Activated CD4-positive, alpha-beta T cell treated with anti-CD3 and anti-CD28 coated beads for 36 hours (primary cell): ENCODE measurements at regions of chr11 and their contacts with region 1.

Region 1: DNA sequence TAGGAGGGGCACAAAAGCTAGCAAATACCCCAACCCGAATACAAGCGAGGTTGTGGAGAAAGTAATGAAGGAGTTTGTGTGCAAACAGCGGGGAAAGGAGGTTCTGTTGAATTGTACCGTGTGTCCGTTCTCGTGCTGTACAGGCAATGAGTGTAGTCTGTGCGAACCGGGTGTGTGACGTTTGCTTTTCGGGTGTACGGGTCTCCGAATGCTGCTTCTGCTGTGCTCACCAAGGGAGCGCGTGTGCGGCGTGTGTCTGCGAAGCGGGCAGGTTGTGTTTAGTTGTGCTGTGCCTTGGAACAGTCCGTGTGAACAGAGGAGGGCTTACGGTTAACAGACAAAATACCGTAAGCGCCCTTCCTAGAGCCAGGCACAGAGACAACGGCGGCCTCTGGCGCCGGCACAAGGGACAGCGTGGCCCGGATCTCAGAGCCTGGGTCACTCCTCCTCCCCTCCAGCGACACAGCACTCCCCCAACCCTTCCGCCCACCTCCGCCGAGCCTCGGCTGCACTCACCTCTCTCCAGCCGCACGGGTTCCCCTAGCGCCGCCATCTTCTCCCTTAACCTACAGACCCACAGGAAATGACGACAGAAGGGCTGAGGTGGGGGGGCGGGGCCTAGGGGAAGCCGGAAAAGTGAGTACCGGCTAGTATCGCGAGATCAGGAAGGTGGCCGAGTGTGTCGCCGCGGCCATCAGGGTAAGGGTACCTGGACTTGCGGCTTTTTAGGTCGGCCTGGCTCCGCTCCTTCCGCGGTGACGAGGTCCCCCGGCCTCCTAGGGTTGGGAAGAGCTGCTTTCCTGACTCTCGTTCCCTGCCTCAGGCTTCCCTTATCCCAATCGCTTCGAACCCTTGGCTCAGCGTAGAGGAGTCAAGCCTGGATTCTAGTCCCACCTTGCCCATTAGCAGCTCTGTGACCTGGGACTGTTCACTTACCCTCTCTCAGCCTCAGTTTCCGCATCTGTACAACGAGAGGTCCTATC is at the start of gene LIN7C:
- DNase-seq: peak; percentile 98
- ATAC-seq: peak; percentile 93
- H3K4me3 Mint-ChIP-seq: peak within 1 kb of the TSS; percentile 84
- H3K27ac Mint-ChIP-seq: peak within 1 kb of the TSS; percentile 99
- H3K4me1 Mint-ChIP-seq: peaks cover 36% of the 10 kb centered on the region
- H3K27me3 Mint-ChIP-seq: no peaks in the 10 kb centered on the region
- total RNA-seq, gene LIN7C: 16.1 to 19.2 TPM

Region 2: GRCh38 chr11:27472398-27473016 is 34.0 kb before region 1 on chr11 and contains the start of gene LGR4:
- CTCF ChIA-PET with region 1: no interaction called
- POLR2A ChIA-PET with region 1: no interaction called
- intact Hi-C with region 1: loop called in 1 of 2 experiments (anchors 1 kb)
- DNase-seq: peak; percentile 80
- ATAC-seq: peak; percentile 90
- H3K4me3 Mint-ChIP-seq: peak within 1 kb of the TSS; percentile 89
- H3K27ac Mint-ChIP-seq: peak within 1 kb of the TSS; percentile 67
- H3K4me1 Mint-ChIP-seq: peaks cover 16% of the 10 kb centered on the region
- H3K27me3 Mint-ChIP-seq: peaks cover 26% of the 10 kb centered on the region
- total RNA-seq, gene LGR4: 0.19 to 0.21 TPM

Region 3: GRCh38 chr11:27754035-27755017 is 247.8 kb after region 1 on chr11:
- CTCF ChIA-PET with region 1: no interaction called
- POLR2A ChIA-PET with region 1: no interaction called
- intact Hi-C with region 1: no loop called
- DNase-seq: no peak
- ATAC-seq: no peak
- H3K4me3 Mint-ChIP-seq: no peak overlapping the region
- H3K27ac Mint-ChIP-seq: no peak overlapping the region
- H3K4me1 Mint-ChIP-seq: no peaks in the 10 kb centered on the region
- H3K27me3 Mint-ChIP-seq: no peaks in the 10 kb centered on the region

Region 4: DNA sequence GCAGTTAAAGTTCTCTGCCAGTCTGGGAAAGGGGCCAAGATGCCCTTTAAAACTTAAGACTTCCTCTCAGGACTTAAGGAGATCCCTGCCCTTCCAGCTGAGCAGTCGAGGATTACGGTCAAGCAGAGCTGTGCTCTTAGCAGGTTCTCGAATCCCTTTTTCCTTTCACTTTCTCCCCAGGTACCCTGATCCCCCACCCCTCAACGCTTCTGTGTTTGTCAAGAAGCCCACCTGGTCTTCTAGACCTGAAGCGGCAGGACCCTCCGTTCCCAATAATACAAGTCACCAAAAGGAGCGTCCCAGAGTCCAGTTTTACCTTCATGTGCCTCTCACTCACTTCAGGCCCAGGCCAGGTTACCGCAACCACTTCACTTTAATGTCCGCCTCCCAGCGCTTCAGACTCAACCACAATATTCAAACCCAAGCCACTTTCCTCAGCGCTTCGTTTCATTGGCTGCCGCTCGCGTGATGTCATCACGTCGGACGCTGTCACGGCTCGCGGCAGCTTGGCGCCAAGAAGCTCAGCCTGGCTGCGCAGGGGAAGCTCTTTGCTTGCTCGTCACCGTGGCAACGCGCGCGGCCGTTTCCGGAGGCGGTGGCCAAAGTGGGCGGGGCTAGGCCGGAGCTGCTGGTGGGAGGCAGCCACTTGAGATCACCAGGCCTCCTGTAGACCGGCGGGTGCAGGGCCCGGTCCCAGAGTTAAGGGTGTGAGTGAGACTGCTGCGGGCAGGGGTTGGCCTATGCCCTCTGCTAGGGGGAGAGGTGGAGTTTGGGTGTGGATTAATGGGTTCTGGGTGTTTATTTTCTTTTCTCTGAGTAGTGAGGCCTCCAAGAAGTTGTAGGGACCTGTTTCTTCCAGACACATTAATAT is 601.5 kb after region 1 on chr11 and contains the starts of genes KIF18A and METTL15:
- CTCF ChIA-PET with region 1: no interaction called
- POLR2A ChIA-PET with region 1: no interaction called
- intact Hi-C with region 1: loop called (anchors 1 to 2 kb)
- DNase-seq: peak; percentile 99
- ATAC-seq: peak; percentile 95
- H3K4me3 Mint-ChIP-seq: peak within 1 kb of the TSS; percentile 98
- H3K27ac Mint-ChIP-seq: peak within 1 kb of the TSS; percentile 99
- H3K4me1 Mint-ChIP-seq: peaks cover 40% of the 10 kb centered on the region
- H3K27me3 Mint-ChIP-seq: no peaks in the 10 kb centered on the region
- total RNA-seq, gene KIF18A: 26.4 to 28.9 TPM
- total RNA-seq, gene METTL15: 13.0 to 16.0 TPM